MCF 10A (cell line): ENCODE measurements at regions of chr2 and their contacts with region 1.

Region 1: DNA sequence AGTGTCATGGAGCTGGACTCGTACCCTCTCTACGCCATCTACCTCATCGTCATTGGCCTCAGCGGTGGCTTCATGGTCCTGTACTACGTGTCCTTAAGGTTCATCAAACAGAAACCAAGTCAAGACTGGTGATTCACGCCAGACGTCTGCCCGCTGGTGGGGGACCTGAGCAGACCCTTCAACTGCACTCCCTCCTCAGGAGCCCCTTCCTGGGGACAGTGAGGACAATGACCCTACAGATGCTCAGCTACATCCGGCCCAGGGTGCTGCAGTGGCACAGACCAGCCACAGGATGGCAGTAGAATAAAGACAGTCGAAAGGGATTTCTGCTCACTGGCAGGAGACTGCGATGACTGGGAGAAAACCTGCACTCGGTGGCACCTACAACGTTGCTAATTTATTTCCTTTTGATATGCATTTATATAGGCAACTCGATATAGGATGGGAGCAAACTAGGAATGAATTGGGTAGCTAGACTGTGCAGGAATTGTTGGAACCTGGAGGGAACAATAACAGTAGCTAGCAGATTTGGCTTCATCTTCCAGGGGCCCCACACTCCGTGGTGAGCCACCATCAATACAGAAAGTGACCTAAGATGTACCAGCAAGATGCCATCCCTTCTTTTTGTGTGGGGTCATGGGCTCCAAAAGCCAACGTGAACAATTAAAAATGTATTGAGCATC is 39.2 kb downstream of the ABCG8 start:
- DNase-seq: peak; percentile 69
- H3K4me3 Mint-ChIP-seq: no peak overlapping the region
- H3K27ac Mint-ChIP-seq: no peak overlapping the region
- H3K4me1 Mint-ChIP-seq: peaks cover 6% of the 10 kb centered on the region
- H3K27me3 Mint-ChIP-seq: peaks cover under 1% of the 10 kb centered on the region
- CTCF ChIP-seq: peak; percentile 82

Region 2: DNA sequence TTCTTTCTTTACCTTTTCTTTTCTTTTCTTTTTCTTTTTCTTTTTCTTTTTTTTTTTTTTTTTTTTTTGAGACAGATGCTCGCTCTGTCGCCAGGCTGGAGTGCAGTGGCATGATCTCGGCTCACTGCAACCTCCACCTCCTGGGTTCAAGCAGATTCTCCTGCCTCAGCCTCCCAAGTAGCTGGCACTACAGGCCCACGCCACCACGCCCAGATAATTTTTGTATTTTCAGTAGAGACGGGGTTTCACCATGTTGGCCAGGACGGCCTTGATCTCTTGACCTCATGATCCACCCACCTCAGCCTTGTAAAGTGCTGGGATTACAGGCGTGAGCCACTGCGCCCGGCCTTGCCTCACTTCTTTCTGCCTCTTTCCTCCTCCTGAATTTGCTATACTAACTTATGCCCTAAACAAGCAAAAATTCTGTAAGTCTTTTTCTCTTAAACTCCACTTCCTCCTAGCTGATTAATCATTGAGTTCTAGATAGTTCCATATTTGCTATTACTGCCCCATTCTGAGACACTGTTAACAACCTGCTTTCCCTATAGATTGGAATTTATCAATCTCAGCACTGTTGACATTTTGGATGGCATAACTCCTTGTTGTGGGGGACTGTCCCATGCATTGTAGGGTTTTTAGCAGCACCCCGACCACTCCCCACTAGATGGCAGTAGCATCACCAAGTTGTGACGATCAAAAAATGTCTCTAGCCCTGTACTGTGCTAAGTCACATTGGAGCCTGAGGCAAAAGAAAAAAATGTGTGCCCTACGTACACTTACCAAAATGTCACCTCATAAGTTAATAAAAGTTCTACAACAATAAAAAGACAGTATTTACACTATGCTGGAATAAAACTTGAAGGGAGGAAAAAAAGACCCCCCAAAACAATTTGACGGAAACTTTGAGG is 265.7 kb before region 1 on chr2:
- CTCF ChIA-PET with region 1: interaction called, 3 read pairs
- POLR2A ChIA-PET with region 1: no interaction called
- intact Hi-C with region 1: loop called (anchors 2 kb)
- DNase-seq: peak; percentile 82
- H3K4me3 Mint-ChIP-seq: no peak overlapping the region
- H3K27ac Mint-ChIP-seq: no peak overlapping the region
- H3K4me1 Mint-ChIP-seq: peaks cover 6% of the 10 kb centered on the region
- H3K27me3 Mint-ChIP-seq: no peaks in the 10 kb centered on the region
- CTCF ChIP-seq: peak; percentile 68

Region 3: DNA sequence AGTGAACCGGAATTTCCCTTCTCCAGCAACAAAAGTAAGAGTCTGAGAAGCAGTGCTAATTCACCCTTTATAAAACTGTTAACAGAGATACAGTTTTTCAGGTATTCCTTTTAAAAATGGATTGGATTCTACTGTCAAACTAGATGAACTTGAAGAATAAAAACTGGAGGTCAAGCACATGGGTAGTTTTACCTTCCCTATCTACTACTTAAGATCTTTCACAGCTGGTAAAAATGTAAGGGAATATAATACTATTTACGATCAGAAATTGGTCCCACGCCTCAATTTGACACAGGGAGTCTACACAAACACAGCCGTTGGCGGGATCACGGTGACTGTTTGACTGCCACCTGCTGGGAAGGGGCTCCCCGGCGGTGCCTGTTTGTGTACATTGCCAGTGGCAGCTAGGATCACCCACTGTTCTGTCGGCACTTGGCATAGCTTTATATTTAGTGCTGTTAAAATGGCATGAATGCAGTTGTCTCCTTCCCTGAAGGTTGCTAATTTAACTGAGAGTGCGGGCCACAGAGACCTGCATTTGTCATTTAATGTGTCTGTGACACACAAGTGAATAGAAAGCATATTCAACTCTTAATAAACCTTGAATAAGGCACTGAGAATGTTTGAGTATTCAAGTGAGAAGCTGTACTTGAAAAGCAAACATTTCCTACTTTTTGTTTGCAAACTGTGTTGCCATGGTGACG is 20.4 kb after region 1 on chr2:
- CTCF ChIA-PET with region 1: interaction called, 14 read pairs
- POLR2A ChIA-PET with region 1: interaction called, 3 read pairs
- intact Hi-C with region 1: no loop called
- DNase-seq: no peak
- H3K4me3 Mint-ChIP-seq: no peak overlapping the region
- H3K27ac Mint-ChIP-seq: no peak overlapping the region
- H3K4me1 Mint-ChIP-seq: no peaks in the 10 kb centered on the region
- H3K27me3 Mint-ChIP-seq: no peaks in the 10 kb centered on the region
- CTCF ChIP-seq: no peak